ENCODE measurements at regions of chr1 and their contacts with region 1.

Region 1: GRCh38 chr1:201703621-201704439 is 125.1 kb upstream of the IPO9 start:
- DNase-seq: peak; percentile 77 to 87
- H3K4me3 ChIP-seq: no peak overlapping the region
- H3K4me3 Mint-ChIP-seq: no peak overlapping the region
- H3K27ac Mint-ChIP-seq: no peak overlapping the region
- H3K4me1 ChIP-seq: no peaks in the 10 kb centered on the region
- H3K4me1 Mint-ChIP-seq: no peaks in the 10 kb centered on the region
- H3K27me3 ChIP-seq: no peaks in the 10 kb centered on the region
- H3K27me3 Mint-ChIP-seq: peaks cover 3% of the 10 kb centered on the region
- CTCF ChIP-seq: peak; percentile 93

Region 2: DNA sequence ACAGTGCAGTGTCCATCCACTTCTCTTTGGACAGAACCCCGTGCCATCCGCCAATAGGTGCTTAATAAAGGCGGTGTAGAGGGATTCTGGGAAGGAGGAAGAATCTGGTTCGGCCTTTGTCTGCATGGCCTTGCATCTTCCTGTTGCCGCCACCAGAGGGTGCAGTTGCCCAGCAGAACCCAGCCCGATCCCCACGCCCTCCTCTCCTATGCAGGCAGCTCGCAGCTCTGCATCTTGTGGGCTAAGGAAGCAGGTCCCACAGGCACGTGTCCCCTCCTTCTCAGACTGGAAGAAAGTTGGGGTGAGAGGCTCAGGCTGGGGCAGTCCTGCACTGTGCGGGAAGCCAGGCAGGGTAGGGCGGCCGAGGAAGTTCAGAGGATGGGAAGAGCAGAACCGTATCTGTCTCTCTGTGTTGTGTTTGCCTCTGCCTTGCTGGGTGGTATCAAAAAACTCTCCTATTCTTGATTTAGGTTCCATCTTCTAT is 144.1 kb before region 1 on chr1:
- CTCF ChIA-PET with region 1: interaction called, 20 read pairs
- POLR2A ChIA-PET with region 1: no interaction called
- intact Hi-C with region 1: loop called (anchors 1 kb)
- DNase-seq: peak; percentile 73 to 82
- H3K4me3 ChIP-seq: no peak overlapping the region
- H3K4me3 Mint-ChIP-seq: no peak overlapping the region
- H3K27ac Mint-ChIP-seq: no peak overlapping the region
- H3K4me1 ChIP-seq: no peaks in the 10 kb centered on the region
- H3K4me1 Mint-ChIP-seq: no peaks in the 10 kb centered on the region
- H3K27me3 ChIP-seq: peaks cover 1% of the 10 kb centered on the region
- H3K27me3 Mint-ChIP-seq: peaks cover 10% of the 10 kb centered on the region
- CTCF ChIP-seq: peak; percentile 88 to 95

Region 3: GRCh38 chr1:201877877-201878401 is 174.1 kb after region 1 on chr1:
- CTCF ChIA-PET with region 1: no interaction called
- POLR2A ChIA-PET with region 1: no interaction called
- intact Hi-C with region 1: no loop called
- DNase-seq: peak; percentile 52 to 57
- H3K4me3 ChIP-seq: no peak overlapping the region
- H3K4me3 Mint-ChIP-seq: no peak overlapping the region
- H3K27ac Mint-ChIP-seq: no peak overlapping the region
- H3K4me1 ChIP-seq: no peaks in the 10 kb centered on the region
- H3K4me1 Mint-ChIP-seq: peaks cover 14% of the 10 kb centered on the region
- H3K27me3 ChIP-seq: no peaks in the 10 kb centered on the region
- H3K27me3 Mint-ChIP-seq: no peaks in the 10 kb centered on the region
- CTCF ChIP-seq: peak; percentile 58 to 71